ENCODE measurements at regions of chr16 and their contacts with region 1.

Region 1: DNA sequence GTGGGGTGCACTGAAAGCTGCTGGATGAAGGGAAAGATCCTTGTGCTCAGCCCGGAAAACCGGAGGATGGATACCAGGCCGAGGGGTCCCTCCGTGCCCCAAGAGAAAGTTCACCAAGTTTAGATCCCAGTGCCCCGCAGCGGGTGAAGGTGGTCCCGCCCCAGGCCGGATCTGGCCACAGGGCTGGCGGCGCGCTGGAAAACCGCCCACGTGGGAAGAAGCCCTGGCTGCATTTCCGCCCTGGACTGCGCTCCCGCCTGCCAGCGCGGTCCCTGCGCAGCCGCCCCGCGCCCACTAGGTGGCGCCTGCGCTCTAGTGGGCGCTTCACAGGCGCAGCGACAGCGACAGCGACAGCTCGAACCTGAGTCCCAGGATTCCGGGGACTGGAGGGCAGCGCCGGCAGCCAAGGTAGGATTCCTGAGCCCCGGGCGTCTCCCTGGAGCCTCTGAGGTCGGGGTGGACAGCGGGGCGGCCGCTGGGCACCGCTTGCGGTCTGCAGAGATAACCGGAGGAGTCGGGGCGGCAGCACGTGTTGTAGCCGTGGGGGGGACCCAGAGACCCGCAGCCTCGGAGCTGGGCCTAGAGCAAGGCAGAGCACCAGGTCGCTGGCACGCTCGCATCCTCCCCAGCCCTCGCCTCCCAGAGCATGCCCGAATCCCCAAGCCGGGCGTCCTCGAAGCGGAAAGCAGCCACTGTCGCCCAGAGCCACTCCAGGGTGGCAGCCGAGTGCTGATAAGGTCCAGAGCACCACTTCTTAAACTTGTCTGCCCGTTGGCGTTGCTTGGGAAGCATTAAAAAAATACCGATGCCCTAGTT is at the start of gene CHD9:
- DNase-seq: peak; percentile 88 to 94 (median 89)
- ATAC-seq: peak; percentile 89
- H3K4me3 ChIP-seq: peak within 1 kb of the TSS; percentile 78
- H3K27ac ChIP-seq: peak within 1 kb of the TSS; percentile 70
- H3K4me1 ChIP-seq: peaks cover 24 to 35% of the 10 kb centered on the region in 2 experiments; a peak in 4 of 5 replicates
- H3K27me3 ChIP-seq: no peaks in the 10 kb centered on the region
- CTCF ChIP-seq: peak; percentile 96 to 98 (median 97)
- EP300 ChIP-seq: no peak; the same call in 1 of the 2 replicates
- POLR2A ChIP-seq: peak; percentile 52
- RAD21 ChIP-seq: peak; percentile 97 to 98
- polyA plus RNA-seq, gene CHD9: 33.7 to 69.3 TPM

Region 2: GRCh38 chr16:53099318-53100130 is 44.6 kb after region 1 on chr16:
- CTCF ChIA-PET with region 1: no interaction called
- POLR2A ChIA-PET with region 1: interaction called, 4 read pairs
- in situ Hi-C with region 1: no loop called
- intact Hi-C with region 1: loop called (anchors 1 kb)
- DNase-seq: peak; percentile 89 to 96 (median 92)
- ATAC-seq: peak; percentile 95
- H3K4me3 ChIP-seq: peak overlapping the region; percentile 47
- H3K27ac ChIP-seq: peak overlapping the region; percentile 82
- H3K4me1 ChIP-seq: peaks cover 16 to 28% of the 10 kb centered on the region in 2 experiments
- H3K27me3 ChIP-seq: no peaks in the 10 kb centered on the region
- CTCF ChIP-seq: no peak
- EP300 ChIP-seq: peak; percentile 52
- POLR2A ChIP-seq: peak; percentile 57
- RAD21 ChIP-seq: no peak

Region 3: GRCh38 chr16:53159781-53160436 is 105.0 kb after region 1 on chr16:
- CTCF ChIA-PET with region 1: interaction called, 16 read pairs
- POLR2A ChIA-PET with region 1: no interaction called
- in situ Hi-C with region 1: no loop called
- intact Hi-C with region 1: loop called (anchors 1 kb)
- DNase-seq: peak; percentile 44 to 74 (median 49)
- ATAC-seq: peak; percentile 97
- H3K4me3 ChIP-seq: no peak overlapping the region
- H3K27ac ChIP-seq: no peak overlapping the region
- H3K4me1 ChIP-seq: no peaks in the 10 kb centered on the region
- H3K27me3 ChIP-seq: no peaks in the 10 kb centered on the region
- CTCF ChIP-seq: peak; percentile 37 to 75 (median 64); a peak in 5 of 6 replicates
- EP300 ChIP-seq: no peak
- POLR2A ChIP-seq: no peak
- RAD21 ChIP-seq: peak; percentile 47 to 63

Region 4: GRCh38 chr16:53220585-53220984 is 165.7 kb after region 1 on chr16:
- CTCF ChIA-PET with region 1: no interaction called
- POLR2A ChIA-PET with region 1: interaction called, 4 read pairs
- in situ Hi-C with region 1: no loop called
- intact Hi-C with region 1: loop called (anchors 5 kb)
- DNase-seq: peak in 3 of 4 experiments; percentile 20 to 57 (median 33)
- ATAC-seq: peak; percentile 81
- H3K4me3 ChIP-seq: no peak overlapping the region
- H3K27ac ChIP-seq: no peak overlapping the region; the same call in 2 of the 3 replicates
- H3K4me1 ChIP-seq: peaks cover 7 to 38% of the 10 kb centered on the region in 2 experiments
- H3K27me3 ChIP-seq: no peaks in the 10 kb centered on the region
- CTCF ChIP-seq: peak; percentile 42 to 56 (median 51); a peak in 3 of 6 replicates
- EP300 ChIP-seq: no peak
- POLR2A ChIP-seq: no peak
- RAD21 ChIP-seq: peak; percentile 40 to 73

Region 5: DNA sequence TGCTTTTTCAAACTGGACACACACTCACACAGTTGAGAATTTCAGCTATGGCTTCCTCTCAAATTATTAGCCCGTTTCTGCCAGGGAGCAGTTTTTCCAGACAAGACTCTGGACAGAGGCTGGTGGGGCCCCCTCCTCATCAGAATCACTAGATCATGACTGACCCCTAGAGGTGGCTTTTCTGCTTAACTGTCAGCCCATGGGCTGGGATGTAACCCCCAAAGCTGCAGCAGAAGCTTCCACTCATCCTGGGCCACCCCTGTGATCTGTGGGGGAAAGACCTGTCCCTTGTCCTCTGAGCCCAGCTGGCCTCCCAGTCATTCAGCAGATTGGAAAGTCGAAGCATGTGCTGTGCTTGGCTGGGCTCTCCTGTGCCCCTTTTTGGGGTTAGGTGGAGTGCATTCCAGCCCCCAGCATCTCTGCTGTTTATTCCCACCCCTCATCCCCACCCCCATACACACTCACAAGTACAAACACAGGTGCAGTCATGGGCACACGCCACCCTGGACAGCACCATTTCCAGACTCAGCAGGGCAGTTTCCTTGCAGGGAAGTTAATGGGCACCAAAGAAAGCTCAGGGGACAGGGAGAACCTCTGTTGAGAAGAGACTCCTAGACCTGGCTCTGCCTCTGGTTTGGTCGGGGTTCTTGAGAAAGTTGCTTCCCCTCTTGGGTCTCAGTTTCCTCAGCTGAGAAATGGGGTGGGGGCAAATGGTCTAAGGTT is 301.8 kb after region 1 on chr16:
- CTCF ChIA-PET with region 1: no interaction called
- POLR2A ChIA-PET with region 1: no interaction called
- in situ Hi-C with region 1: no loop called
- intact Hi-C with region 1: no loop called
- DNase-seq: peak in 1 of 4 experiments; percentile 10
- ATAC-seq: no peak; the same call in 2 of the 3 replicates
- H3K4me3 ChIP-seq: no peak overlapping the region
- H3K27ac ChIP-seq: no peak overlapping the region
- H3K4me1 ChIP-seq: no peaks in the 10 kb centered on the region
- H3K27me3 ChIP-seq: peaks cover 2 to 28% of the 10 kb centered on the region in 2 experiments; a peak in 2 of 5 replicates
- CTCF ChIP-seq: peak; percentile 19 to 41 (median 20); a peak in 2 of 6 replicates
- EP300 ChIP-seq: no peak
- POLR2A ChIP-seq: no peak
- RAD21 ChIP-seq: peak in 1 of 2 experiments; percentile 37; a peak in 1 of 4 replicates

Region 6: DNA sequence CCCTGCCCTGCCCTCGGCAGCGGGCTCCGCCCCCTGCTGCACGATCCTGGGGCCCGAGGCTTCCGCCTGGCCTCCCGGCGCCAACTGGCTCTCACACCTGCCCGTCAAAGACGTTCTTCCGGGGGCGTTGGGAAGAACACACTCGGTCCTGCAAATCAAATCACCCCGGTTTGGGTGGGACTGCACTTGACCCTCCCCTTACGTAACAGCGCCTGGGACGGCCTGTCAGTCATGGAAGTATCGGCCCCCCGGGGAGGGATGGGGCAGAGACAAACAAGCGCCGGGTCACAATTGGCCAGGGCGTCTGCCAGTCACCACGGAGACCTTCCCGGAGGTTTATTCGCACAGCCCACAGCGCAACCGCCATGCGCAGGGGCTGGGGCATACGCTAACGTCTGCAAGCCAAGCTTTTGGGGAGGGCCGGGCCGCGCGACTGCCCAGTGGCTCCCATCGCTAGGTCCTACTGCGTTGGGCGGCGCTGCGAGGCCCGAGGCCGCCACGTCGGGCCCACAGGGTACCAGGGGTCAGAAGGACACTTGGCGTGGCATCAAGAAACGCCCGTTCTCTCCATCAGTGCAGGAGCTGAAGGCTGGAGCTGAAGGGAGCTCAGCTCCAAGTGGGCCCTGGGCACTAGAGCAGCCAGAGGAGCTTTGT is 448.5 kb after region 1 on chr16:
- CTCF ChIA-PET with region 1: no interaction called
- POLR2A ChIA-PET with region 1: no interaction called
- in situ Hi-C with region 1: loop called (anchors 10 kb)
- intact Hi-C with region 1: loop called (anchors 5 kb)
- DNase-seq: peak; percentile 98 to 100 (median 99)
- ATAC-seq: peak; percentile 96
- H3K4me3 ChIP-seq: peak overlapping the region; percentile 72
- H3K27ac ChIP-seq: peak overlapping the region; percentile 60
- H3K4me1 ChIP-seq: peaks cover 7 to 16% of the 10 kb centered on the region in 2 experiments; a peak in 4 of 5 replicates
- H3K27me3 ChIP-seq: no peaks in the 10 kb centered on the region; a peak in 1 of 5 replicates
- CTCF ChIP-seq: 0 out of 6 replicates have a peak, but pooled peaks of 1 of the 3 experiments have one; percentile 3
- EP300 ChIP-seq: no peak
- POLR2A ChIP-seq: peak; percentile 83
- RAD21 ChIP-seq: no peak